ENCODE measurements at regions of chr9 and their contacts with region 1.

Region 1: GRCh38 chr9:111037381-111038305 is 627 bp downstream of the LPAR1 start:
- DNase-seq: no peak
- ATAC-seq: peak; percentile 62
- H3K4me3 ChIP-seq: peak overlapping the region; percentile 53; the same call in 1 of the 2 replicates
- H3K27ac ChIP-seq: no peak overlapping the region
- H3K4me1 ChIP-seq: no peaks in the 10 kb centered on the region
- H3K27me3 ChIP-seq: peaks cover 0 to 10% of the 10 kb centered on the region in 2 experiments; a peak in 1 of 4 replicates
- CTCF ChIP-seq: peak in 2 of 3 experiments; percentile 40 to 54; a peak in 3 of 6 replicates
- EP300 ChIP-seq: no peak
- POLR2A ChIP-seq: no peak
- RAD21 ChIP-seq: peak; percentile 65

Region 2: GRCh38 chr9:110808599-110808980 is 229.1 kb before region 1 on chr9:
- CTCF ChIA-PET with region 1: interaction called, 6 read pairs
- POLR2A ChIA-PET with region 1: interaction called, 4 read pairs
- RAD21 ChIA-PET with region 1: interaction called, 18 read pairs
- SMC1A ChIA-PET with region 1: interaction called, 13 read pairs
- in situ Hi-C with region 1: no loop called
- intact Hi-C with region 1: loop called (anchors 2 kb)
- DNase-seq: peak; percentile 93
- ATAC-seq: peak; percentile 90
- H3K4me3 ChIP-seq: 0 out of 2 replicates have a peak overlapping the region, but pooled peaks have one; percentile 28
- H3K27ac ChIP-seq: peak overlapping the region; percentile 90
- H3K4me1 ChIP-seq: peaks cover 18% of the 10 kb centered on the region
- H3K27me3 ChIP-seq: no peaks in the 10 kb centered on the region
- CTCF ChIP-seq: no peak
- EP300 ChIP-seq: peak; percentile 97 to 98
- POLR2A ChIP-seq: no peak
- RAD21 ChIP-seq: no peak; the same call in 1 of the 2 replicates

Region 3: GRCh38 chr9:110954822-110955291 is 82.8 kb before region 1 on chr9:
- CTCF ChIA-PET with region 1: interaction called, 16 read pairs
- POLR2A ChIA-PET with region 1: no interaction called
- RAD21 ChIA-PET with region 1: interaction called, 35 read pairs
- SMC1A ChIA-PET with region 1: interaction called, 18 read pairs
- in situ Hi-C with region 1: no loop called
- intact Hi-C with region 1: no loop called
- DNase-seq: no peak
- ATAC-seq: peak; percentile 54
- H3K4me3 ChIP-seq: no peak overlapping the region
- H3K27ac ChIP-seq: no peak overlapping the region
- H3K4me1 ChIP-seq: peaks cover 8% of the 10 kb centered on the region
- H3K27me3 ChIP-seq: no peaks in the 10 kb centered on the region
- CTCF ChIP-seq: no peak
- EP300 ChIP-seq: peak in 1 of 2 experiments; percentile 61; a peak in 1 of 4 replicates
- POLR2A ChIP-seq: no peak
- RAD21 ChIP-seq: no peak

Region 4: GRCh38 chr9:111005746-111006470 is 31.7 kb before region 1 on chr9:
- CTCF ChIA-PET with region 1: interaction called, 8 read pairs
- POLR2A ChIA-PET with region 1: interaction called, 4 read pairs
- RAD21 ChIA-PET with region 1: interaction called, 17 read pairs
- SMC1A ChIA-PET with region 1: interaction called, 218 read pairs
- in situ Hi-C with region 1: no loop called
- intact Hi-C with region 1: no loop called
- DNase-seq: no peak
- ATAC-seq: peak; percentile 59
- H3K4me3 ChIP-seq: no peak overlapping the region
- H3K27ac ChIP-seq: no peak overlapping the region
- H3K4me1 ChIP-seq: no peaks in the 10 kb centered on the region
- H3K27me3 ChIP-seq: no peaks in the 10 kb centered on the region
- CTCF ChIP-seq: no peak
- EP300 ChIP-seq: no peak
- POLR2A ChIP-seq: no peak
- RAD21 ChIP-seq: no peak

Region 5: GRCh38 chr9:111068771-111069170 is 31.1 kb after region 1 on chr9:
- CTCF ChIA-PET with region 1: interaction called, 8 read pairs
- POLR2A ChIA-PET with region 1: interaction called, 6 read pairs
- RAD21 ChIA-PET with region 1: interaction called, 56 read pairs
- SMC1A ChIA-PET with region 1: interaction called, 73 read pairs
- in situ Hi-C with region 1: no loop called
- intact Hi-C with region 1: no loop called
- DNase-seq: no peak
- ATAC-seq: no peak
- H3K4me3 ChIP-seq: no peak overlapping the region
- H3K27ac ChIP-seq: no peak overlapping the region
- H3K4me1 ChIP-seq: peaks cover 6% of the 10 kb centered on the region
- H3K27me3 ChIP-seq: no peaks in the 10 kb centered on the region
- CTCF ChIP-seq: no peak
- EP300 ChIP-seq: no peak
- POLR2A ChIP-seq: no peak
- RAD21 ChIP-seq: no peak

Region 6: DNA sequence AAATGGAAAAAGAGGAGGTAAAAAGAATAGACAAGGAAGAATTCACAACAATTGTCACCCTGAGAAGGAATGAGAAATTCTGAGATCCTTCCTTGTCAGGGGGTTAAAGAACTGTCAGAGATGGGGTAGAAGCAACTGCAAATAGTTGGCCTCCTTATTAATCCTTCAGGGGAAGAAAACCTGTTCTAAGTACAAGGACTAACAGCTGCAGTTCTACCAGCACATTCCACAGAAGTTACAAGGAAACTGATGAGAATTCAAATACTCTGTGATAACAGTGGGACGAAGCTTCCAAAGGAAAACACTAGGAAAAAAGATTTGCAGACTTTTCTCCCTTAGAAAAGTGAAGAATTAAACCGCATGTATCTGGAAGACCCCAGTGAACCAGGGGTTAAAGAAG is 198.7 kb after region 1 on chr9:
- CTCF ChIA-PET with region 1: interaction called, 4 read pairs
- POLR2A ChIA-PET with region 1: no interaction called
- RAD21 ChIA-PET with region 1: interaction called, 5 read pairs
- SMC1A ChIA-PET with region 1: interaction called, 11 read pairs
- in situ Hi-C with region 1: no loop called
- intact Hi-C with region 1: no loop called
- DNase-seq: no peak
- ATAC-seq: no peak
- H3K4me3 ChIP-seq: no peak overlapping the region
- H3K27ac ChIP-seq: no peak overlapping the region
- H3K4me1 ChIP-seq: no peaks in the 10 kb centered on the region
- H3K27me3 ChIP-seq: no peaks in the 10 kb centered on the region
- CTCF ChIP-seq: no peak
- EP300 ChIP-seq: no peak
- POLR2A ChIP-seq: no peak
- RAD21 ChIP-seq: no peak

Region 7: DNA sequence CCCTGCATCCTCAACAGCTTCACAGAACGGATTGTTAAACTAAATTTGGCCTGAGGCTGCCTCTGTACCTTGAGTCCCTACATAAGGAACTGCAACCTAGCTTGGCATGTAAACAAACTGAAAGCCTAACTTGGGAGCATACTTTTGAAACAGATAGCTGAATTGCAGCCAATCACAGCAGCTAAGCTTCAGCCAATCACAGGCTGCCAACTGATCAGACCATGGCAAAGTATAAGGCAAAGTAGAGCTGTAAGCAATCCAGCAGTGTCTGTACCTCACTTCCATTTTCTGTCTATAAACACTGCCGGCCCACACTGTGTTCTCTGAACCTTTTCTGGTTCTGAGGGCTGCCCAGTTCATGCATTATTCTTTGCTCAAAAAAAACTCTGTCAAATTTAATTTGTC is 478.4 kb after region 1 on chr9:
- CTCF ChIA-PET with region 1: no interaction called
- POLR2A ChIA-PET with region 1: no interaction called
- RAD21 ChIA-PET with region 1: no interaction called
- SMC1A ChIA-PET with region 1: no interaction called
- in situ Hi-C with region 1: no loop called
- intact Hi-C with region 1: no loop called
- DNase-seq: peak; percentile 5
- ATAC-seq: peak; percentile 59
- H3K4me3 ChIP-seq: no peak overlapping the region
- H3K27ac ChIP-seq: no peak overlapping the region
- H3K4me1 ChIP-seq: no peaks in the 10 kb centered on the region
- H3K27me3 ChIP-seq: no peaks in the 10 kb centered on the region
- CTCF ChIP-seq: no peak
- EP300 ChIP-seq: no peak
- POLR2A ChIP-seq: no peak
- RAD21 ChIP-seq: no peak

Measured in GM12878 (cell line).